Activated CD4-positive, alpha-beta memory T cell treated with anti-CD3 and anti-CD28 coated beads for 36 hours (primary cell): ENCODE measurements at regions of chr14 and their contacts with region 1.

Region 1: DNA sequence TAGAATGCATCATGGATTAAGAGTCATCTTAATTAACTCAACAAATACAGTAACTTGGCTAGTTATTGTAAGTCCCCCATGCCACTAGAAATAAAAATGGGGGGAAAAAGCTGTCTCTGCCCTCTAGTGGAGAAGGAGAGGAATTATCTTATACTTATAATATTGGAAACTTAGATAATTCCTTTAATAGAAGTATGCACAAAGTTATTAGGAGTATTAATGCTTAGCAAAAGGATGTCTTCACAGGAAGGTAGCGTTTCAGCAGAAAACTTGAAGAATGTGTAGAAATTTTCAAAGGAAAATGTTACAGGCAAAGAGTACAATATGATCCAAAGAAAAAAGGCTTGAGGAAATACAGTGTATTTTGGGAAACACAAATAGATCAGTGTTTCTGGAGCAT is 19.8 kb downstream of the OR5AU1 start:
- DNase-seq: no peak
- H3K4me3 Mint-ChIP-seq: no peak overlapping the region
- H3K27ac Mint-ChIP-seq: no peak overlapping the region
- H3K4me1 Mint-ChIP-seq: no peaks in the 10 kb centered on the region
- H3K27me3 Mint-ChIP-seq: no peaks in the 10 kb centered on the region

Region 2: GRCh38 chr14:21123429-21123828 is 12.6 kb before region 1 on chr14:
- CTCF ChIA-PET with region 1: interaction called, 20 read pairs
- POLR2A ChIA-PET with region 1: no interaction called
- intact Hi-C with region 1: no loop called
- DNase-seq: no peak
- H3K4me3 Mint-ChIP-seq: no peak overlapping the region
- H3K27ac Mint-ChIP-seq: no peak overlapping the region
- H3K4me1 Mint-ChIP-seq: no peaks in the 10 kb centered on the region
- H3K27me3 Mint-ChIP-seq: peaks cover 12% of the 10 kb centered on the region